ENCODE measurements at regions of chr6 and their contacts with region 1.

Region 1: DNA sequence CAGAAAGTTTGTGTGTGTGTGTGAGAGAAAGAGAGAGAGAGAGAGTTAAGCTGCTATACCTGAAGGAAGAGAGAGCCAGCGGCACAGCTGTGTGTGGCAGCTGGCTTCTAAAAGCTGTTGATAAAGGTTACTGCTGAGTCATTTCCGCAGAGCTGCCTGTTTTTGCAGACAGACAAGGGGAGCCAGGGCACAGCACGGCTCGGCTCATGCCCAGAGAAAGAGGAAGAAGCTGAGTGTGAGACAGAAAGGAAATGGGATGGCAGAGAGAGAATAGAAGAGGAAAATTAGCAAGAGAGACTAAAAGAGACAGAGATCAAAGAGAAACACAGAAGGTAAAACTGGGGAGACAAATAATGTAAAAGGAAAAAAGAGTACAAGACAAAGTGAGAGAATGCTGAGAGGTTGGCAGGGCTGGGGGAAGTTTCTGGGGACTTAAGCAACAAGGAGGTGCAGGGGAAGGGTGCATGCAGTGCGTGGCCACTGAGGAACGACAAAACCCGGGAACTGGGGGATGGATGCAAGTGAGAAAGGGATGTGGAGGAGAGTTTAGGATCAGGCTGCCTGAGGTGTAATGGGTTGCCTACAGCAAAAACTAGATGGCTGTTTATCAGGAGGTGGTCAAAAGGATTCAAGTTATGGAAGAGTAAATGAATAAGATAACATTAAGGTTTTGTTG is 22.7 kb downstream of the HLA-A start:
- DNase-seq: peak; percentile 35
- ATAC-seq: peak; percentile 86
- H3K4me3 Mint-ChIP-seq: peak overlapping the region; percentile 49
- H3K27ac Mint-ChIP-seq: peak overlapping the region; percentile 94
- H3K4me1 Mint-ChIP-seq: peaks cover 37% of the 10 kb centered on the region
- H3K27me3 Mint-ChIP-seq: peaks cover 3% of the 10 kb centered on the region; the same call in 1 of the 2 replicates
- CTCF ChIP-seq: no peak

Region 2: GRCh38 chr6:29976588-29977424 is 11.8 kb after region 1 on chr6:
- CTCF ChIA-PET with region 1: interaction called, 10 read pairs
- POLR2A ChIA-PET with region 1: interaction called, 15 read pairs
- DNase-seq: peak; percentile 62
- ATAC-seq: peak; percentile 61
- H3K4me3 Mint-ChIP-seq: peak overlapping the region; percentile 79
- H3K27ac Mint-ChIP-seq: no peak overlapping the region
- H3K4me1 Mint-ChIP-seq: peaks cover 34% of the 10 kb centered on the region
- H3K27me3 Mint-ChIP-seq: peaks cover 83% of the 10 kb centered on the region
- CTCF ChIP-seq: no peak

Measured in WTC11 (cell line).